ENCODE measurements at regions of chr15 and their contacts with region 1.

Region 1: GRCh38 chr15:33138000-33138399 is 56.5 kb downstream of the FMN1 start:
- DNase-seq: no peak
- ATAC-seq: no peak
- H3K4me3 Mint-ChIP-seq: no peak overlapping the region
- H3K27ac Mint-ChIP-seq: no peak overlapping the region
- H3K4me1 Mint-ChIP-seq: no peaks in the 10 kb centered on the region
- H3K27me3 Mint-ChIP-seq: no peaks in the 10 kb centered on the region

Region 2: GRCh38 chr15:33119273-33119672 is 18.7 kb before region 1 on chr15:
- CTCF ChIA-PET with region 1: interaction called, 3 read pairs
- POLR2A ChIA-PET with region 1: no interaction called
- intact Hi-C with region 1: loop called in 1 of 2 experiments (anchors 2 kb)
- DNase-seq: no peak
- ATAC-seq: no peak
- H3K4me3 Mint-ChIP-seq: no peak overlapping the region
- H3K27ac Mint-ChIP-seq: no peak overlapping the region
- H3K4me1 Mint-ChIP-seq: peaks cover under 1% of the 10 kb centered on the region
- H3K27me3 Mint-ChIP-seq: no peaks in the 10 kb centered on the region

Region 3: DNA sequence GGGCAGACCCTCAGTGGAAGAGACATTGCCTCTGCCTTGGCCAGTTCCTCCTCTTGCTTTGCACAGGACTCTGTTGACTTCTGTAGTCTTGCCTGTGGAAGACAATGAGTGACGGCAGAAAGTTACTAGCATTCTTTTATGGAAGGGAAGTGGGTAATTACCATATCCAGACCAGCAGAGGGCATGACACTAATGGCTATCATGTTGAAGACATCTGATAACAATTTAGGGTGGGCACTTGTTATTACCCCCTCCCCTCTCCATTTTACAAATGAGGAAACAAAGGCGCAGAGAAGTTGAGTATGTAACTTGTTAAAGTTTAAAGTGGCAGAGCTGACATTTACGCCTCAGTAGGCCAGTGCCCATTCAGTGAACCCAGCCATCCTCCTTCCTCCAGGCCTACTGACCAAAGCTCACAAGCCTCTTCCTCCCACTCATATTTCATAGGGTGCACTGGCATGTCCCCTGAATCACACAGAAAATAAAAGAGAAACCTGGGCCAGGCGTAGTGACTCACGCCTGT is 104.7 kb after region 1 on chr15:
- CTCF ChIA-PET with region 1: no interaction called
- POLR2A ChIA-PET with region 1: no interaction called
- intact Hi-C with region 1: no loop called
- DNase-seq: no peak
- ATAC-seq: no peak
- H3K4me3 Mint-ChIP-seq: no peak overlapping the region
- H3K27ac Mint-ChIP-seq: peak overlapping the region; percentile 38
- H3K4me1 Mint-ChIP-seq: peaks cover 16% of the 10 kb centered on the region
- H3K27me3 Mint-ChIP-seq: no peaks in the 10 kb centered on the region

Measured in activated CD4-positive, alpha-beta T cell treated with anti-CD3 and anti-CD28 coated beads for 36 hours (primary cell).